Pancreas (tissue), 10 donors: ENCODE measurements at regions of chr1 and their contacts with region 1.

Region 1: DNA sequence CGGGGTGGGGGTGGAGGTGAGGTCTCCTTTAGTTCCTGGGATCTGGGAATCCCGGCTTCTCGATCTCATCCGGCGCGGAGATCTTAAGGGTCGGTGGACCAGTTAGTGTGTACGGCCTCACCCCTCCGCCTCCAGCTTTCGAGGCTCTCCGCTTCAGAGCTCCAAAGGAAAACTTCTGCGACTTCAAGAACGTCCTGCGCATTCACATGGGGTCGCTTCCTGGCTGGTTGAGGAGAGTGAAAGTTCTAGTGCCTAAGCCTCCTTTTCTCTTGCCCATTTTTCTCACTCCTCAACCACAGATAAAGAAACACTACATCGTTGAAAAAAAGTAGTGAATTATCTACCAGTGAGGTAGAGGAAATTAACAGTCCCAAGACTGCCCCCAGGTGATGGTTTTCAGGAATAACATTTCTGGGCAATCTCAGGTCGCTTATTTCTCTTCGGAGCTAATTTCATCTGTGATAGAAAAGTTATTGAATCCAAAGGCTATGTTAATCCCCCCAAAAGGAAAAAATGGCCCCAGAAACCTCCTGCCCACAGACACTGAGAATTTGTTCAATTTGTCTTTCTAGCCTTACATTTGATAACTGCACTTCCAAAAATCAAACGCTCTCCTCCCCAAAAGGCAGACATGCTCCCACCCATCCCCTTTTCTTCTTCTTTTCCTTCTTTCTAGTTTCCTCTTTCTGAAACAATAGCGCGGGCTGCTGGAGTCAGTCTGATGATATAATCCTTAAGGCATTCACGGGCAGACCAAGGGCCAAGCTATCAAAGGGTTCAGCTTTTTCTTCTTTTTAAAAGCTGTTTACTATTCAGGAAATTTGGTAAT is 20.6 kb upstream of the TBX15 start:
- DNase-seq: peak in 2 of 6 donors; percentile 24 to 52
- ATAC-seq: peak; percentile 70 to 90 (median 84)
- H3K4me3 ChIP-seq: peak overlapping the region in 2 of 4 donors; percentile 12 to 35
- H3K27ac ChIP-seq: no peak overlapping the region
- H3K4me1 ChIP-seq: peaks cover 0 to 15% (median 7%) of the 10 kb centered on the region in 3 donors
- H3K27me3 ChIP-seq: peaks cover 0 to 38% (median 11%) of the 10 kb centered on the region in 4 donors
- CTCF ChIP-seq: peak; percentile 22 to 50 (median 37)

Region 2: GRCh38 chr1:118151312-118151937 is 857.3 kb before region 1 on chr1:
- intact Hi-C with region 1: loop called in 1 of 3 experiments (anchors 10 kb)
- DNase-seq: peak in 5 of 6 donors; percentile 27 to 70 (median 46)
- ATAC-seq: peak in 3 of 4 donors; percentile 47 to 71 (median 63)
- H3K4me3 ChIP-seq: no peak overlapping the region
- H3K27ac ChIP-seq: no peak overlapping the region
- H3K4me1 ChIP-seq: peaks cover 0 to 6% (median 0%) of the 10 kb centered on the region in 3 donors
- H3K27me3 ChIP-seq: no peaks in the 10 kb centered on the region
- CTCF ChIP-seq: peak; percentile 32 to 65 (median 56)

Region 3: GRCh38 chr1:118767971-118768370 is 240.7 kb before region 1 on chr1:
- intact Hi-C with region 1: no loop called
- DNase-seq: no peak
- ATAC-seq: no peak
- H3K4me3 ChIP-seq: no peak overlapping the region
- H3K27ac ChIP-seq: no peak overlapping the region
- H3K4me1 ChIP-seq: no peaks in the 10 kb centered on the region
- H3K27me3 ChIP-seq: no peaks in the 10 kb centered on the region
- CTCF ChIP-seq: no peak

Region 4: DNA sequence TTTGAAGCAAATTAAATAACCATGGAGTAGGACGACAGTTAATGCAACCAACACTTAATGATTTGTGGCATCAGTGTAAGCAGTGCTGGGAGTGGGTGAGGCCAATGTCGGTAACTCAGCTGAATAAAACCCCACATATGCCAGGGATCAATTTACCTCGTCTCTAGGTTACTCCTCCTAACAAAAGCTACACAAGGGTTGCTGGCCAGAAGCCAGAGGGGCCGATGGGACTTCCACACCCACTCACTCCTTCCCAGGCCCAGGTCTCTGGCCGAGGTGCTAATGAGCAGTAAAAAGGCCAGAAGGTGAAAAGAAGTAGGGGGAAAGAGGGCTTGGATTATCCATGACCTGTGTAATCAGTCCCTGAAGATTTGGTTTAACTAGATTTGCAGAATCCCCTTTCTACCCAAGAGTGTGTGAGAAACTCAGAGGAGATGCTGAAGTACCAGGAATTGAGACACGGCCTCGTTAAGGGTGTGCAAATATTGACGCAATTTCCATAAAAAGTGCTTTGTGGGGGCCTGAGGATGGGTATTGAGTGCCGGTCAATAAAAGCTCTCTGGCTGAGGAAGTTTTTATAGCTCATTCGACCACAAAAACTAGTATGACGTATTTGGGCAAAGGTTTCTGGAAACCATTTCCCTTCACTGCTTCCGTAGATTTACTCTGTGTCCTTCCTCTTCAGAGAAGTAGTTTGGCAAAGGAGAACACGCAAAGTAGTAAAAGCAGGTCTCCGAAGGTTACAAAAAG is 166.1 kb before region 1 on chr1:
- intact Hi-C with region 1: no loop called
- DNase-seq: peak in 1 of 6 donors; percentile 19
- ATAC-seq: no peak
- H3K4me3 ChIP-seq: no peak overlapping the region
- H3K27ac ChIP-seq: no peak overlapping the region
- H3K4me1 ChIP-seq: no peaks in the 10 kb centered on the region
- H3K27me3 ChIP-seq: no peaks in the 10 kb centered on the region
- CTCF ChIP-seq: no peak